MCF 10A (cell line): ENCODE measurements at regions of chr10 and their contacts with region 1.

Region 1: GRCh38 chr10:102641880-102642735 is 2.2 kb upstream of the TRIM8 start:
- DNase-seq: peak; percentile 95
- H3K4me3 Mint-ChIP-seq: peak overlapping the region; percentile 90
- H3K27ac Mint-ChIP-seq: peak overlapping the region; percentile 85
- H3K4me1 Mint-ChIP-seq: peaks cover 21% of the 10 kb centered on the region
- H3K27me3 Mint-ChIP-seq: no peaks in the 10 kb centered on the region
- CTCF ChIP-seq: no peak

Region 2: GRCh38 chr10:102450194-102450938 is 191.7 kb before region 1 on chr10:
- CTCF ChIA-PET with region 1: no interaction called
- POLR2A ChIA-PET with region 1: interaction called, 10 read pairs
- intact Hi-C with region 1: no loop called
- DNase-seq: peak; percentile 76
- H3K4me3 Mint-ChIP-seq: peak overlapping the region; percentile 89
- H3K27ac Mint-ChIP-seq: peak overlapping the region; percentile 80
- H3K4me1 Mint-ChIP-seq: peaks cover 7% of the 10 kb centered on the region
- H3K27me3 Mint-ChIP-seq: no peaks in the 10 kb centered on the region
- CTCF ChIP-seq: no peak

Region 3: GRCh38 chr10:102596506-102596971 is 45.6 kb before region 1 on chr10:
- CTCF ChIA-PET with region 1: interaction called, 6 read pairs
- POLR2A ChIA-PET with region 1: interaction called, 3 read pairs
- intact Hi-C with region 1: loop called (anchors 5 kb)
- DNase-seq: peak; percentile 66
- H3K4me3 Mint-ChIP-seq: no peak overlapping the region
- H3K27ac Mint-ChIP-seq: no peak overlapping the region
- H3K4me1 Mint-ChIP-seq: no peaks in the 10 kb centered on the region
- H3K27me3 Mint-ChIP-seq: no peaks in the 10 kb centered on the region
- CTCF ChIP-seq: peak; percentile 86

Region 4: GRCh38 chr10:102657984-102658724 is 16.0 kb after region 1 on chr10:
- CTCF ChIA-PET with region 1: no interaction called
- POLR2A ChIA-PET with region 1: interaction called, 14 read pairs
- intact Hi-C with region 1: no loop called
- DNase-seq: no peak
- H3K4me3 Mint-ChIP-seq: no peak overlapping the region
- H3K27ac Mint-ChIP-seq: no peak overlapping the region
- H3K4me1 Mint-ChIP-seq: peaks cover 10% of the 10 kb centered on the region
- H3K27me3 Mint-ChIP-seq: no peaks in the 10 kb centered on the region
- CTCF ChIP-seq: no peak

Region 5: GRCh38 chr10:102713814-102714620 is 71.9 kb after region 1 on chr10 and contains the start of gene ARL3:
- CTCF ChIA-PET with region 1: interaction called, 6 read pairs
- POLR2A ChIA-PET with region 1: interaction called, 115 read pairs
- intact Hi-C with region 1: loop called (anchors 1 kb)
- DNase-seq: peak; percentile 98
- H3K4me3 Mint-ChIP-seq: peak within 1 kb of the TSS; percentile 97
- H3K27ac Mint-ChIP-seq: peak within 1 kb of the TSS; percentile 92
- H3K4me1 Mint-ChIP-seq: peaks cover 30% of the 10 kb centered on the region
- H3K27me3 Mint-ChIP-seq: no peaks in the 10 kb centered on the region
- CTCF ChIP-seq: peak; percentile 40
- total RNA-seq, gene ARL3: 6.8 and 7.0 TPM in 2 replicates

Region 6: GRCh38 chr10:102743588-102744373 is 101.7 kb after region 1 on chr10 and contains the start of gene WBP1L:
- CTCF ChIA-PET with region 1: no interaction called
- POLR2A ChIA-PET with region 1: interaction called, 16 read pairs
- intact Hi-C with region 1: no loop called
- DNase-seq: peak; percentile 99
- H3K4me3 Mint-ChIP-seq: peak within 1 kb of the TSS; percentile 91
- H3K27ac Mint-ChIP-seq: peak within 1 kb of the TSS; percentile 97
- H3K4me1 Mint-ChIP-seq: peaks cover 24% of the 10 kb centered on the region
- H3K27me3 Mint-ChIP-seq: no peaks in the 10 kb centered on the region
- CTCF ChIP-seq: no peak
- total RNA-seq, gene WBP1L: 19.8 and 24.8 TPM in 2 replicates